ENCODE measurements at regions of chr10 and their contacts with region 1.

Region 1: GRCh38 chr10:132551093-132551807 is 13.7 kb downstream of the INPP5A start:
- DNase-seq: peak; percentile 59
- H3K4me3 Mint-ChIP-seq: peak overlapping the region; percentile 43
- H3K27ac Mint-ChIP-seq: peak overlapping the region; percentile 87
- H3K4me1 Mint-ChIP-seq: peaks cover 38% of the 10 kb centered on the region
- H3K27me3 Mint-ChIP-seq: peaks cover 6% of the 10 kb centered on the region

Region 2: GRCh38 chr10:132540456-132540855 is 10.8 kb before region 1 on chr10:
- CTCF ChIA-PET with region 1: interaction called, 25 read pairs
- DNase-seq: no peak
- H3K4me3 Mint-ChIP-seq: peak overlapping the region; percentile 87
- H3K27ac Mint-ChIP-seq: peak overlapping the region; percentile 93
- H3K4me1 Mint-ChIP-seq: peaks cover 76% of the 10 kb centered on the region
- H3K27me3 Mint-ChIP-seq: peaks cover 2% of the 10 kb centered on the region

Measured in activated naive CD4-positive, alpha-beta T cell treated with anti-CD3 and anti-CD28 coated beads, Interleukin-2, amount 10 ng/mL, durations not matched to agents 7 days and 5 days (primary cell).